Aorta (tissue), 5 donors: ENCODE measurements at regions of chr7 and their contacts with region 1.

Region 1: GRCh38 chr7:24572997-24573625 is at the start of gene PALS2:
- DNase-seq: peak; percentile 78 to 91
- ATAC-seq: peak; percentile 88
- H3K4me3 ChIP-seq: peak within 1 kb of the TSS; percentile 94 to 98
- H3K27ac ChIP-seq: peak within 1 kb of the TSS; percentile 92 to 95
- H3K4me1 ChIP-seq: no peaks in the 10 kb centered on the region
- H3K27me3 ChIP-seq: no peaks in the 10 kb centered on the region
- total RNA-seq, gene PALS2: 44.9 to 57.3 TPM

Region 2: DNA sequence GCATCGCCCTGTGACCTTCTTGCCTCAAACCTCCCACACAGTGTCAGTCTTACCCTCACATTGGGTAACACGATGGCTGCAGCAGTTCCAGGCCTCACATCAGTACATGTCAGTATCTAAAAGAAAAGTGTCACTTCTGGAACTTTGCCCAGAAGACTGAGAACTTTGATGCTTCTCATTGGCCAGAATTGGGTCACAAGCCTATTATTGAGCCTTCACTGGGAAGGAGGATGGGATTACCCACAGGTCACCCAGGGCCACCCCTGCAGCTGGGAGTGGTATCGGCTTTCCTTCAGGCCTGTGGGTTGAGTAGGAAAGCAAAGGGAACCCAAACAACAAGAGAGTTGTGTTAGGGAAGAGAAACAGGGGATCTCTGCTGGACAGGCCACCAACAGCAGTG is 177.6 kb before region 1 on chr7:
- intact Hi-C with region 1: loop called (anchors 5 kb)
- DNase-seq: no peak
- ATAC-seq: no peak
- H3K4me3 ChIP-seq: no peak overlapping the region
- H3K27ac ChIP-seq: no peak overlapping the region
- H3K4me1 ChIP-seq: no peaks in the 10 kb centered on the region
- H3K27me3 ChIP-seq: peaks cover 0 to 1% of the 10 kb centered on the region in 2 donors

Region 3: GRCh38 chr7:24401628-24402593 is 171.2 kb before region 1 on chr7:
- intact Hi-C with region 1: loop called (anchors 5 kb)
- DNase-seq: no peak
- ATAC-seq: no peak
- H3K4me3 ChIP-seq: peak overlapping the region; percentile 14 to 59
- H3K27ac ChIP-seq: no peak overlapping the region
- H3K4me1 ChIP-seq: no peaks in the 10 kb centered on the region
- H3K27me3 ChIP-seq: no peaks in the 10 kb centered on the region

Region 4: GRCh38 chr7:24477398-24478136 is 95.5 kb before region 1 on chr7:
- intact Hi-C with region 1: loop called (anchors 1 to 5 kb)
- DNase-seq: peak in 1 of 2 donors; percentile 54
- ATAC-seq: peak; percentile 87
- H3K4me3 ChIP-seq: no peak overlapping the region
- H3K27ac ChIP-seq: peak overlapping the region; percentile 79 to 96
- H3K4me1 ChIP-seq: peaks cover 3 to 6% of the 10 kb centered on the region in 2 donors
- H3K27me3 ChIP-seq: no peaks in the 10 kb centered on the region